Ovary (tissue), 10 donors: ENCODE measurements at regions of chr11 and their contacts with region 1.

Region 1: DNA sequence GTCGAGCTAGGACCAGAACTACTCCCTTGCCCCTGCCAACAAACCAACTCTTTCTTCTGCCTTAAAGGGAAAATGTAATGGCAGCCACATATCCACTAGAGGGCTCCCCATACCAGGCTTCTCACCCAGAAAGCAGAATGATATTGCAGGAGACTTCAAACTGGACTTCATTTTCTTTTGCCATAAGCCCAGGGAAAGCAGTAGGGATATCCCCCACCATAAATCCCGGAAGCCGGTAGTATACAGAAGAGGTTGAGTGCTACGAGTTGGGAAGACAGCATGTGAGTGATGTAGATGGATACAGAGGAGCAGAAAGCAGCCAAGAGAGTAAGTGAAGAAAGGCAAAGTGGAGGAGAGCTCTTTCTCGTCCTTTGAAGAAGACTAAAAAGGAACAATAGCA is 12.1 kb downstream of the PLAAT5 start:
- DNase-seq: peak in 4 of 5 donors; percentile 33 to 68 (median 44)
- H3K4me3 ChIP-seq: no peak overlapping the region
- H3K27ac ChIP-seq: no peak overlapping the region
- H3K4me1 ChIP-seq: no peaks in the 10 kb centered on the region
- H3K27me3 ChIP-seq: no peaks in the 10 kb centered on the region
- CTCF ChIP-seq: peak; percentile 81 to 91 (median 89)
- EP300 ChIP-seq: no peak
- POLR2A ChIP-seq: no peak

Region 2: GRCh38 chr11:63635762-63636465 is 157.0 kb after region 1 on chr11:
- intact Hi-C with region 1: loop called (anchors 2 to 5 kb)
- DNase-seq: peak; percentile 62 to 76 (median 72)
- H3K4me3 ChIP-seq: no peak overlapping the region
- H3K27ac ChIP-seq: no peak overlapping the region
- H3K4me1 ChIP-seq: no peaks in the 10 kb centered on the region
- H3K27me3 ChIP-seq: no peaks in the 10 kb centered on the region
- CTCF ChIP-seq: peak; percentile 29 to 84 (median 79)
- EP300 ChIP-seq: no peak
- POLR2A ChIP-seq: no peak

Region 3: DNA sequence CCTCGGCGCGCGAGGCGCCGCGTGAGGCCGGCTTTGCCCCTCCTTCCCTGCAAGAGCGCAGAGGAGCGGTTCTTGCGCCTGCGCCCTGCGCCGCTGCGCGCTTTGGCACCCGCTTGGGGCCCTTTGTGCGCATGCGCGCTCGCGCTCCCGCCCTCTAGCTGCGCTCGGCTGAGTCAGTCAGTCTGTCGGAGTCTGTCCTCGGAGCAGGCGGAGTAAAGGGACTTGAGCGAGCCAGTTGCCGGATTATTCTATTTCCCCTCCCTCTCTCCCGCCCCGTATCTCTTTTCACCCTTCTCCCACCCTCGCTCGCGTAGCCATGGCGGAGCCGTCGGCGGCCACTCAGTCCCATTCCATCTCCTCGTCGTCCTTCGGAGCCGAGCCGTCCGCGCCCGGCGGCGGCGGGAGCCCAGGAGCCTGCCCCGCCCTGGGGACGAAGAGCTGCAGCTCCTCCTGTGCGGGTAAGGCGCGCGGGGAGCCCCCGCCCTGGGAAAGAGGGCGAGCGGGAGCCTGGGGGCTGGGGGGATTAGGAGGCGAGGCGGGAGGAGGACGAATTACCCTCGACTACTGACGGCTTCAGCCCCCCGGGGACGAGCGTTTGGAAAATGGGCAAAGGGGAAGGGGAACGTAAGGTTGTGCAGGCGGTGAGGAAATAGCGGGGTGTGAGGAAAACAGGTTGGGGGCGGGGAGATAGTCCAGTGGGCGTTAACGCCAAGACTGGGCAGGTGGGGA is 202.6 kb after region 1 on chr11 and contains the start of gene RTN3:
- intact Hi-C with region 1: no loop called
- DNase-seq: peak; percentile 95 to 99 (median 96)
- H3K4me3 ChIP-seq: peak within 1 kb of the TSS; percentile 97
- H3K27ac ChIP-seq: peak within 1 kb of the TSS; percentile 76 to 87
- H3K4me1 ChIP-seq: no peaks in the 10 kb centered on the region
- H3K27me3 ChIP-seq: no peaks in the 10 kb centered on the region
- CTCF ChIP-seq: peak in 2 of 3 donors; percentile 31 to 39
- EP300 ChIP-seq: no peak
- POLR2A ChIP-seq: peak; percentile 92
- total RNA-seq, gene RTN3: 53.2 to 82.9 (median 64.1) TPM

Region 4: GRCh38 chr11:63738720-63739360 is 259.9 kb after region 1 on chr11:
- intact Hi-C with region 1: loop called in 3 of 4 experiments (anchors 5 to 10 kb)
- DNase-seq: peak; percentile 49 to 82 (median 73)
- H3K4me3 ChIP-seq: no peak overlapping the region
- H3K27ac ChIP-seq: no peak overlapping the region
- H3K4me1 ChIP-seq: no peaks in the 10 kb centered on the region
- H3K27me3 ChIP-seq: no peaks in the 10 kb centered on the region
- CTCF ChIP-seq: peak; percentile 73 to 88 (median 83)
- EP300 ChIP-seq: no peak
- POLR2A ChIP-seq: no peak

Region 5: GRCh38 chr11:63745304-63746170 is 266.6 kb after region 1 on chr11:
- intact Hi-C with region 1: loop called in 1 of 4 experiments (anchors 10 kb)
- DNase-seq: no peak
- H3K4me3 ChIP-seq: no peak overlapping the region
- H3K27ac ChIP-seq: no peak overlapping the region
- H3K4me1 ChIP-seq: no peaks in the 10 kb centered on the region
- H3K27me3 ChIP-seq: no peaks in the 10 kb centered on the region
- CTCF ChIP-seq: no peak
- EP300 ChIP-seq: no peak
- POLR2A ChIP-seq: no peak